IMR-90 (cell line): ENCODE measurements at regions of chr3 and their contacts with region 1.

Region 1: GRCh38 chr3:112642912-112643506 is 2.1 kb upstream of the CCDC80 start:
- DNase-seq: peak; percentile 92
- ATAC-seq: peak; percentile 67
- H3K4me3 ChIP-seq: no peak overlapping the region
- H3K27ac ChIP-seq: 0 out of 2 replicates have a peak overlapping the region, but pooled peaks have one; percentile 32
- H3K4me1 ChIP-seq: peaks cover 38% of the 10 kb centered on the region
- H3K27me3 ChIP-seq: no peaks in the 10 kb centered on the region
- CTCF ChIP-seq: peak; percentile 98
- POLR2A ChIP-seq: peak; percentile 66; the same call in 1 of the 2 replicates
- RAD21 ChIP-seq: peak; percentile 99

Region 2: DNA sequence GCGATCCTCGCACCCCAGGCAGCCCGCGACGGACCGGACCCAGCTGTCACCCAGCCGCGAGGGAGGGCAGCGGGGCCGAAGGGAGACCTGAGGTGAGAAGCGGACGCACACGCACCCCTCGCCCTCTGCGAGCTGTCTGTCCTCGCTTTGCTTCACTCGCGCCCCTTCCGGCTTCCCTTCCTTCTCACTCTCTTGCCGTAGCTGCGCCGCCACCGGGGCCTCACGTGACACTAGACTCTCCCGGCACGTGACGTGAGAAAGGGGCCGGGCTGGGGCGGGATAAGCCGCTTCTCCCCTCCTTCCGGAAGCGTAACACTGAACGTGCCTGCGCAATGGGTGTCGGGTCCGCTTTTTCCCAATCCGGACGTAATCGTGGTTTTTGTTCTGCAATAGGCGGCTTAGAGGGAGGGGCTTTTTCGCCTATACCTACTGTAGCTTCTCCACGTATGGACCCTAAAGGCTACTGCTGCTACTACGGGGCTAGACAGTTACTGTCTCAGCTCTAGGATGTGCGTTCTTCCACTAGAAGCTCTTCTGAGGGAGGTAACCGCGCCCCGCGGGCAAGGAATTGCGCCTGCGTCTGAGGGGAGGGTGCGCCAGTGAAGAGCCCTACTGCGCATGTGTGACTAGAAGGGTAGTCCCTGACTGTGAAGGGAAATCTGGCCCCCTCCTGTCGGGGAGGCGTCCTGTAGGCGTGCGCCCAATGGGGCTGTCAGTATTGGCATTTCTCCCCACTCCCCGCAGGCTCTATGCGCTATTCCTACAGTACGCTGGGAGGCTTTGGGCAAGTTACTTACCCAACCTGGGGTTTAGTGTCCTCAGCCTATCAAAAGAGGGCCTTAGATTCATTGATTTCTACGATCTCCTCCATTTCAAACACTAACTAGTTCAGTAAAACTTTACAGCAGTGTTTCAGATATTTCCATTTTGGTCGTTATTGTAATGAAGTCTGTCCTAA is 81.0 kb before region 1 on chr3 and contains the starts of genes ATG3 and SLC35A5:
- CTCF ChIA-PET with region 1: no interaction called
- POLR2A ChIA-PET with region 1: no interaction called
- dilution Hi-C with region 1: no loop called
- in situ Hi-C with region 1: no loop called
- intact Hi-C with region 1: no loop called
- DNase-seq: peak; percentile 98
- ATAC-seq: peak; percentile 88
- H3K4me3 ChIP-seq: peak within 1 kb of the TSS; percentile 56
- H3K27ac ChIP-seq: peak within 1 kb of the TSS; percentile 91
- H3K4me1 ChIP-seq: no peaks in the 10 kb centered on the region
- H3K27me3 ChIP-seq: no peaks in the 10 kb centered on the region
- CTCF ChIP-seq: 0 out of 2 replicates have a peak, but pooled peaks have one; percentile 6
- POLR2A ChIP-seq: peak; percentile 88
- RAD21 ChIP-seq: no peak
- total RNA-seq, gene ATG3: 30.8 and 70.3 TPM in 2 replicates
- total RNA-seq, gene SLC35A5: 25.6 and 30.0 TPM in 2 replicates

Region 3: GRCh38 chr3:112676659-112677234 is 33.7 kb after region 1 on chr3:
- CTCF ChIA-PET with region 1: interaction called, 3 read pairs
- POLR2A ChIA-PET with region 1: interaction called, 3 read pairs
- dilution Hi-C with region 1: no loop called
- in situ Hi-C with region 1: no loop called
- intact Hi-C with region 1: loop called (anchors 2 kb)
- DNase-seq: peak; percentile 99
- ATAC-seq: peak; percentile 88
- H3K4me3 ChIP-seq: no peak overlapping the region
- H3K27ac ChIP-seq: peak overlapping the region; percentile 88
- H3K4me1 ChIP-seq: peaks cover 27% of the 10 kb centered on the region
- H3K27me3 ChIP-seq: no peaks in the 10 kb centered on the region
- CTCF ChIP-seq: no peak
- POLR2A ChIP-seq: no peak
- RAD21 ChIP-seq: peak; percentile 31

Region 4: GRCh38 chr3:112734718-112735350 is 91.8 kb after region 1 on chr3:
- CTCF ChIA-PET with region 1: interaction called, 16 read pairs
- POLR2A ChIA-PET with region 1: no interaction called
- dilution Hi-C with region 1: no loop called
- in situ Hi-C with region 1: no loop called
- intact Hi-C with region 1: loop called (anchors 2 kb)
- DNase-seq: peak; percentile 78
- ATAC-seq: peak; percentile 81
- H3K4me3 ChIP-seq: no peak overlapping the region
- H3K27ac ChIP-seq: no peak overlapping the region
- H3K4me1 ChIP-seq: 0 out of 2 replicates have a peak, but pooled peaks cover 1% of the 10 kb centered on the region
- H3K27me3 ChIP-seq: no peaks in the 10 kb centered on the region
- CTCF ChIP-seq: peak; percentile 82
- POLR2A ChIP-seq: no peak
- RAD21 ChIP-seq: peak; percentile 86

Region 5: DNA sequence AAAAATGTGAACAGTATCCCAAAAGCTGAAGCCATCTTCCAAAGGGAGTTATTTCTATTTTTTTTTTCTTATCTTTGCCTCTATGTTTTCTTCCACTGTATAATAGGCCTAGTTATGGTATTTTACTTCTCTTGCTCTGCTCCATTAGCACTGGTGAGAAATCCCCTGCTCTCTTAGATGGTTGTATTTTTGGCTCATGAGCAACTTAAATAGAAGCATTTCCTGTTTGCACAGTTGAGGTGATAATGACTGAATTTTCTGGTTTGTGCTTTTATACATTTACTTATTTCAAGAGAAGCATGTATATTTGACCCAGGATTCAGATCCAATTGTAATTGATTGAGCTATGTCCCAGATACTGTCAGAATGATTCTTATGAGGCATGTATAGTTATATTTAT is 265.2 kb after region 1 on chr3:
- CTCF ChIA-PET with region 1: no interaction called
- POLR2A ChIA-PET with region 1: no interaction called
- dilution Hi-C with region 1: no loop called
- in situ Hi-C with region 1: no loop called
- intact Hi-C with region 1: loop called (anchors 10 kb)
- DNase-seq: no peak
- ATAC-seq: no peak
- H3K4me3 ChIP-seq: no peak overlapping the region
- H3K27ac ChIP-seq: no peak overlapping the region
- H3K4me1 ChIP-seq: no peaks in the 10 kb centered on the region
- H3K27me3 ChIP-seq: no peaks in the 10 kb centered on the region
- CTCF ChIP-seq: no peak
- POLR2A ChIP-seq: no peak
- RAD21 ChIP-seq: no peak

Region 6: GRCh38 chr3:113211330-113212149 is 568.5 kb after region 1 on chr3 and contains the start of gene BOC:
- CTCF ChIA-PET with region 1: no interaction called
- POLR2A ChIA-PET with region 1: no interaction called
- dilution Hi-C with region 1: no loop called
- in situ Hi-C with region 1: no loop called
- intact Hi-C with region 1: loop called (anchors 5 kb)
- DNase-seq: peak; percentile 68
- ATAC-seq: peak; percentile 75
- H3K4me3 ChIP-seq: peak within 1 kb of the TSS; percentile 76
- H3K27ac ChIP-seq: peak within 1 kb of the TSS; percentile 92
- H3K4me1 ChIP-seq: peaks cover 16% of the 10 kb centered on the region
- H3K27me3 ChIP-seq: no peaks in the 10 kb centered on the region; the same call in 1 of the 2 replicates
- CTCF ChIP-seq: 0 out of 2 replicates have a peak, but pooled peaks have one; percentile 16
- POLR2A ChIP-seq: peak; percentile 53; the same call in 1 of the 2 replicates
- RAD21 ChIP-seq: no peak
- total RNA-seq, gene BOC: 5.3 and 6.8 TPM in 2 replicates